ENCODE measurements at regions of chr17 and their contacts with region 1.

Region 1: DNA sequence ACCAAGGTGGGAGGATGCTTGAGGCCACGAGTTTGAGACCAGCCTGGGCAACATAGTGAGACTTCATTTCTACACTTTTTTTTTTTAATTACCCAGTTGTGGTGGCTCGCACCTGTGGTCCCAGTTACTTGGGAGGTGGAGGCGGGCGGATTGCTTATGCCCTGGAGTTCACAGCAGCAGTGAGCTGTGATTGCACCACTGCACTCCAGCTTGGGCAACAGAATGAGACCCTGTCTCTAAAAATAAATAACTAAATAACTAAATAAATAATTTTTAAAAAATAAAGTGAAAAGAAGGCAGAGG is 9.3 kb downstream of the DNAI2 start:
- DNase-seq: no peak
- CTCF ChIP-seq: no peak

Region 2: GRCh38 chr17:74296548-74296936 is 13.2 kb after region 1 on chr17:
- CTCF ChIA-PET with region 1: interaction called, 29 read pairs
- POLR2A ChIA-PET with region 1: interaction called, 5 read pairs
- DNase-seq: no peak
- CTCF ChIP-seq: peak; percentile 62

Region 3: GRCh38 chr17:74307984-74308773 is 24.9 kb after region 1 on chr17:
- CTCF ChIA-PET with region 1: no interaction called
- POLR2A ChIA-PET with region 1: no interaction called
- DNase-seq: no peak
- CTCF ChIP-seq: no peak

Measured in GM10248 (cell line).